Common myeloid progenitor, CD34-positive (primary cell): ENCODE measurements at regions of chr4 and their contacts with region 1.

Region 1: DNA sequence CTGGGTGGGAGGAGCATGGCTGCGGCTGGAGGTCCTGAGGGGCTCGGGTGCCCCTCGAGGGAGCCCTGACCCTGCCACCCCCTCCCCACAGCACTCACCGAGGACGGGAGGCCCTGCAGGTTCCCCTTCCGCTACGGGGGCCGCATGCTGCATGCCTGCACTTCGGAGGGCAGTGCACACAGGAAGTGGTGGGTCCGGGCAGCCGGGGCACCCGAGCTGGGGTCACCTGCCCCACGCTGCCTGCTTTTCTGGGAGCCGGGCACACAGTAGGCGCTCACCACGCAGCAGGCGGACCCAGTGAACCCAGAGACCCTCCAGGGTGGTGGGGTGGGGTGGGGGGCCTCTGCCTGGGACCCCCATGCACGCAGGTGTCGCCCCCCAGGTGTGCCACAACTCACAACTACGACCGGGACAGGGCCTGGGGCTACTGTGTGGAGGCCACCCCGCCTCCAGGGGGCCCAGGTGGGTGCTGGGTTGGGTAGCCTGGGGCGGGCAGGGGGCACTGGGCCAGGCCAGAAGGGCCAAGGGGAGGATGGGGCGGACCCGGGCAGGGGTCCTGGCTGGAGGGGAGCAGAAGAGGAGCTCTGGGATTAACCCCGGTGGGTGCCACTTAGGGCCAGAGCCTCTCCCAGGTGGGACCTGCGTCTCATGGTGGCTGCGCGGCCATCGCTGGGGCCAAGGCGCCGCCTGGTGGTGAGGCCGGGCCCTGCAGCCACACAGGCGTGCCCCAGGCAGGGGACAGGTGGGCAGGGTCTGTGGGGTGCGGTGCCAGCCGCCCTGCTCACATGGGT is 1.4 kb downstream of the HGFAC start:
- DNase-seq: peak; percentile 36 to 64 (median 64)
- H3K4me3 ChIP-seq: no peak overlapping the region
- H3K27ac ChIP-seq: no peak overlapping the region
- H3K4me1 ChIP-seq: peaks cover 0 to 8% (median 2%) of the 10 kb centered on the region in 4 experiments
- H3K27me3 ChIP-seq: no peaks in the 10 kb centered on the region

Region 2: DNA sequence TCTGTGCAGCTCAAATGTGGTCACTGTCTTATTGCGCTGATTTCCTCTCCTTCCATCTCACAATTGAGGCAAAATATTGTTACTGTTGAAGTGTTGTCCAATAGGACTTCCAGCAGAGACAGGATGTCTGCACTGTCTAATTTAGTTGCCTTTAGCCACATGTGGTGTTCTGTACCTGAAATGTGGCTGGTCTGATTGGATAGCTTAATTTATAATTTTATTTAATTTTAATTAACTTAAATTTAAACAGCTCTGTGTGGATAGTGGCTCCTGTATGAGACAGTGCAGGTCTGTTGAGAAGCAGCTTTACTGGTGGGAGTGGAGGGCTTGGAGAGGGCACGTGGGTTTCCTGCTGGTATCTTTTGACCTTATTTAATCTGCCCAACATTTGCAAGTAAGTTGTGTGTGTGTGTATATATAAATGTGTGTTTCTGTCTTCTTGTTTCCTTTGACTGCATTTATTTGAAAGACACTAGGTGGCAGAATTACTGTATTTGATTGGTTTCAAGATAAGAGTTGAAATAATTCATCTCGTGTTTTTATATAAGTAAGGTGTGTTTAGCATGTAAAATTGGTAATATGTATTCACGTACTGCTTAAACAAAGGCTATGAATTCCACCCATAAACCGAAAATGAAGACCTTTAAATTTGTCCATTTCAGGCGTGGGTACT is 249.5 kb before region 1 on chr4:
- CTCF ChIA-PET with region 1: interaction called, 14 read pairs
- POLR2A ChIA-PET with region 1: no interaction called
- DNase-seq: peak; percentile 14 to 47 (median 40)
- H3K4me3 ChIP-seq: no peak overlapping the region
- H3K27ac ChIP-seq: no peak overlapping the region
- H3K4me1 ChIP-seq: peaks cover 0 to 19% (median 13%) of the 10 kb centered on the region in 4 experiments
- H3K27me3 ChIP-seq: no peaks in the 10 kb centered on the region

Region 3: DNA sequence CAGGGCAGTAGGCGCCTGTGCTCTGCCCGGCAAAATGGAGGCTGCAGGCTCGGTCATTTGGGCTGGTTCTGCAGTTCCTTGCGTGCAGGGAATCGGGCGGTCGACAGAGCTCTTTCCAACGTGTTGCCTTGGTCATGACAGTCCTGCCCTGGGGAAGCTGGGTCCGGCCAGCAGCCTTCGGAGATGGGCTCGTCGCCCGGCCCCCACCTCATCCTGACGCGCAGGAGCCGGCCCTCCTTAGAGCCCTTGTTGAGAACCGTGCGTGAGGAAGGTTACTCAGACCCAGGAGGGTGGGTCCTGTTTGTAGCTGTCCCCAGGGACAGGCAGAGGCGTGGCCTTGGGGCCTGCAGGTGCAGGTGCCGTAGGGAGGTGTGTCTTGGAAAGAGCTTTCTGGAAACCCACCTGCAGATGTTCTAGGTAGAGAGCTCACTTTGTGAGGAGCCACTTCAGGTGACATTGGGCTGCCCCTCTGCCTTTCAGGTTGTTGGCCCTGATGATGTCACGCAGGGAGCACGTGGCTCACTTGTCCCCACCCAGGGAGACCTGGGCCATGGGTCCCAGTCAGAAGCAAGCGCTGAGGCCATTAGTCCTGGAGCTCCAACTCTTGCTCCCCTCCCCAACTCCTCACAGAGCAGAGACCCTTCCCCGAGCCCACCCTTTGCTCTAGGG is 16.6 kb before region 1 on chr4:
- CTCF ChIA-PET with region 1: interaction called, 18 read pairs
- POLR2A ChIA-PET with region 1: interaction called, 3 read pairs
- DNase-seq: no peak
- H3K4me3 ChIP-seq: no peak overlapping the region
- H3K27ac ChIP-seq: no peak overlapping the region
- H3K4me1 ChIP-seq: no peaks in the 10 kb centered on the region
- H3K27me3 ChIP-seq: no peaks in the 10 kb centered on the region

Region 4: GRCh38 chr4:3514806-3515460 is 71.8 kb after region 1 on chr4:
- CTCF ChIA-PET with region 1: no interaction called
- POLR2A ChIA-PET with region 1: no interaction called
- DNase-seq: no peak
- H3K4me3 ChIP-seq: no peak overlapping the region
- H3K27ac ChIP-seq: no peak overlapping the region
- H3K4me1 ChIP-seq: no peaks in the 10 kb centered on the region
- H3K27me3 ChIP-seq: no peaks in the 10 kb centered on the region